Prostate gland (tissue), 2 donors: ENCODE measurements at regions of chr1 and their contacts with region 1.

Region 1: GRCh38 chr1:51569284-51570062 is 47.4 kb upstream of the OSBPL9 start:
- DNase-seq: peak; percentile 59
- H3K4me3 ChIP-seq: no peak overlapping the region
- H3K27ac ChIP-seq: peak overlapping the region; percentile 18 to 68
- H3K4me1 ChIP-seq: peaks cover 16% of the 10 kb centered on the region
- H3K27me3 ChIP-seq: no peaks in the 10 kb centered on the region
- CTCF ChIP-seq: peak in 1 of 4 experiments; percentile 5
- POLR2A ChIP-seq: no peak

Region 2: DNA sequence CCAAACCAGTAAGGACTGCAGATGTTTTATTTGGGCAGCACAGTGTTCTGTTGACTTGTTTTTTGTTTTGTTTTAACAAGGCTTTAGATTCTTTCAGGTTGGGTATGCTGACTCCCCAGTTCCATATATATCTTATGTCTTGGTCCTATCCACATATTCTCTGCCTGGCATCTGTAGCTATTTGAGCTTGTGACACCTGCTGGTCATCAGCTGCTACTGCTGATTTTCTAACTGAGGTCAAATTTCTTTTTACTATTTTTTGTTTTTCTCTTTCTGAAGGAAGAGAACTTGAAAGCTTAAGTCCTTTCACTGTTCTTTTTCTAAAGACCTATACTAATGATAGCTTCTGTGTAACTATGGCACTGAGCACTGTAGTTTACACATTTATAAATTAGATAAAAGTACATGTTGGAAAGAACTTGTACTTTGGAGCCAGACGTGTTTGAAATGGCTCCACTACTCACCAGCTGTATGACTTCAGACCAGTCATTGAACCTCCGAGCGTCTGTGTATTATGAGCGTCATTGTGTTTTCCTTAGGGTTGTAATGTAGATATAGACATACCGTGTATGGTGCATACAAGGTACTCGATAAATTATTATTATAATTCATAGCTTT is 199.6 kb after region 1 on chr1:
- intact Hi-C with region 1: loop called (anchors 10 kb)
- DNase-seq: peak; percentile 21
- H3K4me3 ChIP-seq: no peak overlapping the region
- H3K27ac ChIP-seq: peak overlapping the region in 1 of 2 donors; percentile 29
- H3K4me1 ChIP-seq: no peaks in the 10 kb centered on the region
- H3K27me3 ChIP-seq: no peaks in the 10 kb centered on the region
- CTCF ChIP-seq: peak; percentile 65 to 84 (median 78)
- POLR2A ChIP-seq: no peak